HepG2 (cell line): ENCODE measurements at regions of chr18 and their contacts with region 1.

Region 1: DNA sequence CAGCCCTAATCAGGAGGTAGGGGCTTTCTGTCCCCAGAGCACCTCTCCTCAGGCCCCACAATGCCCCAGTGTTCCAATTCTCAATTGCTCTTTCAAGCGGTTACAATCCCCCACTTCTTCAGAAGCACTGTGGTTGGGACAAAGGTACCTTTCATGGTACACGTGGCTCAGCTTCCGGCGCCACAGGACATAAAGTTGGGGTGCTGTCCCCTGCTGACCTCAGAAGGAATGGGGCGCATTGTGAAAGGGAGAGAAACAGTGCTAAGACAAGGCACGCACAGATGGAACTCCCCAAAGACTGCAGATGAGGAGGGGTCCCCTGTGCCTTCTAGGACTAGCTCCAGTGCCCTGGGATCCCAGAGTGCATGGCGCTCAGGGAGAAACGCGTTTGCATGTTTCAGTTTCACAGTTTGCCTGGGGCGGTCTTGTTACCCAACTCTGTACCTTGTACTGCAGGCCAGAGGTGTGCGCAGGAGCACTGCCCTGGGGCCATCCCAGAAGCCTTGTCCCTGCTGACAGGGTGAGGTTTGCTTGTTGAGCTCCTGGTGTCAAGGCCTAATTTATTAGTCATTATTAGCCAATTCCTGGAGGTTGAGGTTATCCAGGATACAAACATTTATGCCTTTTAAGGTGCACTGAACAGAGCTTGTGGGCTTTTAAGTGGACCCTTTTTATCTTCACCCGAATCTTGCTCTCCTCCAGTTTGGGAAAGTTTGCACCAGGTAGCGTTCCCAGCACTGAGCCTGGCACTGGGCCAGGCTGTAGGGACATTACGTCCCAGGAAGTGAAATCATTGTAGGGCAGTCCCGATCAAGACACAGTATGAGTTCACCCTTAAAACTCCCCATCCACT is 7.6 kb downstream of the CNDP1 start:
- DNase-seq: peak; percentile 92
- ATAC-seq: peak; percentile 97
- H3K4me3 ChIP-seq: peak overlapping the region; percentile 5 to 57 (median 12); a peak in 4 of 6 replicates
- H3K27ac ChIP-seq: peak overlapping the region; percentile 96
- H3K4me1 ChIP-seq: peaks cover 53% of the 10 kb centered on the region
- H3K27me3 ChIP-seq: no peaks in the 10 kb centered on the region
- CTCF ChIP-seq: no peak
- EP300 ChIP-seq: peak; percentile 70 to 86; a peak in 2 of 4 replicates
- POLR2A ChIP-seq: peak; percentile 79 to 88
- RAD21 ChIP-seq: peak; percentile 39; the same call in 1 of the 2 replicates

Region 2: DNA sequence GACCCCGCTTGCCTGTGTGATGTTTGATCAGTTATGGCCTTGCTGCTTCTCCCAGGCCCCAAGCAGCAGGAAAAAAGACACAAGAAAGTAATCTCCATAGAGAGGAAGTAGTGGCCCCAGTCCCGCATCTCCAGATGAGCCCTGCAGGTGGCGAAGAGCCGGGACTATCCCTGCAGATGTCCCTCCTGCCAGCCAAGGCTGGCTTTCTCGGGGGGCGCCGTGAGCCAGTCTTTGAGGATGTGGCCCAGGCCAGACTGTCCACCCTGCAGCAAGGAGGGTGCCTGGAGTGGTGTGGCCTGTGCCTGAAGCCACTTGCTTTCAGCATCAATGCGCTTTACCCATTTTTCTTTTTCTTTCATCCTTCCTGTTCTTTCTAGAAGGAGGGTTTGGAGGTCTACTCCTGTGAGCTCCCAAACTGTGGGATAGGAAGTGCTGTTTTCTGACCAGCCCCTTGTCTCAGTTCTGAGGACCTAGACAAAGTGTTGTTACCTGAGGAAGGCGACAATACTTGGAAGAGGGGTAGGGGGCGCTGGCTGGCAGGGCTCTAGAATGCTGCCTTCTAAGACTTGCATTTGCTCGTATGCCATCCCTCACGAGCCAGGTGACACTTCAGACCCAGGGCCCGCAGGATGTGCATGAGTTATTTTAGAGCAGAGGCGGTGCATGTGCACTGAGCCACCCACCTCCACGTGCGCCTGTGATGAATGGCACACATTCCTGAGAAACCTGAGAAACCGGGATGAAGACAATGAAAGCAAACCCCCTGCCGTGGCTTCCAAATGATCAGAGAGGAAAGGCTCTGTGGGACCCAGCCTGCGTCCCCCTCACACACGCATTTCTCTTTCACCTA is 650.1 kb before region 1 on chr18:
- CTCF ChIA-PET with region 1: no interaction called
- POLR2A ChIA-PET with region 1: no interaction called
- in situ Hi-C with region 1: no loop called
- intact Hi-C with region 1: no loop called
- DNase-seq: no peak
- ATAC-seq: peak; percentile 78
- H3K4me3 ChIP-seq: no peak overlapping the region
- H3K27ac ChIP-seq: no peak overlapping the region
- H3K4me1 ChIP-seq: no peaks in the 10 kb centered on the region
- H3K27me3 ChIP-seq: no peaks in the 10 kb centered on the region; a peak in 2 of 5 replicates
- CTCF ChIP-seq: 0 out of 2 replicates have a peak, but pooled peaks have one; percentile 17
- EP300 ChIP-seq: no peak
- POLR2A ChIP-seq: no peak
- RAD21 ChIP-seq: no peak

Region 3: DNA sequence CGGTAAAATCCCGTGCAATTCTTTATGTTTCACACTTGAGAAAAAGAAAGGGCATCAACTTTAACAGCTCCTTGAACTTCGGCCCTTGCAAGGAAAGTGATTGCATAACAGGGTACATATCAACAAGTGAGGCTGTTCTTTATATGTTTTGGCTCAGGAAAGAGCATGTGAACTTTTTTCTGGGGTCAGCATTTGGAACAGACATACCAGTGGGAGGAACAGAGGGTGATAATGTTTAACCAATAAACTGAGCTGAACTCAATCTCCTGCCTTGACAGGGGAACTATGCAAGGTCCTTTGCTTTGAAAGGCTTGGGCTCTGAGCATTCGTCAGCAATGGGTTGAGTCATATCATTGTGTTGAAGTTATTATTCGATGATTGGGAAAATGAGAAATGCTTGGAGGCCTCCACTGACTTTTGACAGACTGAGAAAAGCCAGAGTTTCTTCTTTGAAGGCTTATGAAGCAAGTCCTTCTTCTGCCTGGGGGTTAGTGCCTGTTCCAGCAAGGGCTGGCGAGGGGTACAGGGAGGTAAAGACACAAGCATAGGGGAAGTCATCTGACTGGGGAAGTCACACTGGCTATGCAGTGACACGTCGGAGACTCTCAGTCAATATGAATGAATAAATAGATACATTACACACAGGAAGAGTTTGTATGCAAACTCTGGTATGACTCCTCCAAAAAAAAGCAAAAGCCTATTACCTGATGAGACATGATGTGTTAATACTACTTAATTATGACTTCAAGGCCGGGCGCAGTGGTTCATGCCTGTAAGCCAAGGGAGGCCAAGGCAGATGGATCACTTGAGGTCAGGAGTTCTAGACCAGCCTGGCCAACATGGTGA is 307.4 kb before region 1 on chr18:
- CTCF ChIA-PET with region 1: no interaction called
- POLR2A ChIA-PET with region 1: interaction called, 11 read pairs
- in situ Hi-C with region 1: no loop called
- intact Hi-C with region 1: no loop called
- DNase-seq: peak; percentile 98
- ATAC-seq: peak; percentile 98
- H3K4me3 ChIP-seq: peak overlapping the region in 1 of 3 experiments; percentile 33; a peak in 1 of 6 replicates
- H3K27ac ChIP-seq: peak overlapping the region; percentile 98
- H3K4me1 ChIP-seq: peaks cover 66% of the 10 kb centered on the region
- H3K27me3 ChIP-seq: no peaks in the 10 kb centered on the region
- CTCF ChIP-seq: no peak
- EP300 ChIP-seq: peak; percentile 34 to 96; a peak in 3 of 4 replicates
- POLR2A ChIP-seq: 0 out of 4 replicates have a peak, but pooled peaks have one; percentile 15 to 32
- RAD21 ChIP-seq: no peak

Region 4: GRCh38 chr18:74291771-74292540 is 250.0 kb before region 1 on chr18 and contains the start of gene CYB5A:
- CTCF ChIA-PET with region 1: no interaction called
- POLR2A ChIA-PET with region 1: interaction called, 3 read pairs
- in situ Hi-C with region 1: no loop called
- intact Hi-C with region 1: loop called (anchors 2 kb)
- DNase-seq: peak; percentile 98
- ATAC-seq: peak; percentile 93
- H3K4me3 ChIP-seq: peak within 1 kb of the TSS; percentile 82 to 94 (median 91)
- H3K27ac ChIP-seq: peak within 1 kb of the TSS; percentile 94
- H3K4me1 ChIP-seq: peaks cover 50% of the 10 kb centered on the region
- H3K27me3 ChIP-seq: no peaks in the 10 kb centered on the region; a peak in 1 of 5 replicates
- CTCF ChIP-seq: peak; percentile 13; the same call in 1 of the 2 replicates
- EP300 ChIP-seq: peak; percentile 26 to 74; a peak in 2 of 4 replicates
- POLR2A ChIP-seq: peak; percentile 60 to 72
- RAD21 ChIP-seq: 0 out of 2 replicates have a peak, but pooled peaks have one; percentile 32
- total RNA-seq, gene CYB5A: 356 and 411 TPM in 2 replicates

Region 5: DNA sequence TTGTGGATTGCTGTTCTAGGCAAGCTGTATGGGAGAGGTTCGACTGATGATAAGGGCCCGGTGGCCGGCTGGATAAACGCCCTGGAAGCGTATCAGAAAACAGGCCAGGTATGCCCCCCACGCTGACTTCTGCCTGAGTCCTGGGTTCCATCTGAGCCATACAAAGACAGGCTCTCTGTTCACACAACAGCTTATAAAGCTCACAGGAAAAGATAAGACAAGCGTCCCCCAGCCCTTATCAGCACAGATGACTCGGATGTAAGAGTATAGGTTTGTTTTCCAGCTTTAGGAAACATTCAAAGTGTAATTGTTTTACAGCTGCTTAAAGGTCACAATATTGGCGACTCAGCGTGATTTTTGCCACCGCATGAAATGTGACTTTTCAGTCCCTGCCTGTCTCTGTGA is 33.1 kb before region 1 on chr18:
- CTCF ChIA-PET with region 1: no interaction called
- POLR2A ChIA-PET with region 1: interaction called, 3 read pairs
- in situ Hi-C with region 1: no loop called
- intact Hi-C with region 1: loop called (anchors 1 kb)
- DNase-seq: no peak
- ATAC-seq: no peak; the same call in 1 of the 3 replicates
- H3K4me3 ChIP-seq: no peak overlapping the region
- H3K27ac ChIP-seq: no peak overlapping the region
- H3K4me1 ChIP-seq: peaks cover 10% of the 10 kb centered on the region
- H3K27me3 ChIP-seq: no peaks in the 10 kb centered on the region
- CTCF ChIP-seq: no peak
- EP300 ChIP-seq: peak in 1 of 2 experiments; percentile 15; a peak in 1 of 4 replicates
- POLR2A ChIP-seq: no peak
- RAD21 ChIP-seq: no peak

Region 6: DNA sequence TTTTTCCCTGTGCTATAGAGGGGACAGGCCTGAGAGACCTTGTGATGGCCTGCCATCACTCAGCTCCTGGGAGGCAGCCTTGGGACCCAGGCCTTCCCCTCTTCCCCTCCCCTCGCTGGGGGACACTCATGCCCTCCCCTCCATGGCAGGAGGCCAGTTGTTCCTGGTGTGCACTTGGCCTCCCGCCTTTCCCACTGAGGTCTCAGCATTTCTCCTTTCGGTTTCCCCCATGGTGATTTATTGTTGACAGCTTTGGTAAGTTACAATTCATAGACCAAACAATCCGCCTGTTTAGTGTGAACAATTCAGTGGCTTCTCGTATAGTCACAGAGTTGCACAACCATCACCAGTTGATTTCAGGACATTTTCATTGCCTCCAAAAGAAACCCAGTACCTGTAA is 17.8 kb before region 1 on chr18:
- CTCF ChIA-PET with region 1: no interaction called
- POLR2A ChIA-PET with region 1: interaction called, 13 read pairs
- in situ Hi-C with region 1: no loop called
- intact Hi-C with region 1: no loop called
- DNase-seq: no peak
- ATAC-seq: no peak
- H3K4me3 ChIP-seq: no peak overlapping the region
- H3K27ac ChIP-seq: no peak overlapping the region
- H3K4me1 ChIP-seq: peaks cover 7% of the 10 kb centered on the region; the same call in 1 of the 2 replicates
- H3K27me3 ChIP-seq: no peaks in the 10 kb centered on the region
- CTCF ChIP-seq: no peak
- EP300 ChIP-seq: no peak
- POLR2A ChIP-seq: no peak
- RAD21 ChIP-seq: no peak

Region 7: DNA sequence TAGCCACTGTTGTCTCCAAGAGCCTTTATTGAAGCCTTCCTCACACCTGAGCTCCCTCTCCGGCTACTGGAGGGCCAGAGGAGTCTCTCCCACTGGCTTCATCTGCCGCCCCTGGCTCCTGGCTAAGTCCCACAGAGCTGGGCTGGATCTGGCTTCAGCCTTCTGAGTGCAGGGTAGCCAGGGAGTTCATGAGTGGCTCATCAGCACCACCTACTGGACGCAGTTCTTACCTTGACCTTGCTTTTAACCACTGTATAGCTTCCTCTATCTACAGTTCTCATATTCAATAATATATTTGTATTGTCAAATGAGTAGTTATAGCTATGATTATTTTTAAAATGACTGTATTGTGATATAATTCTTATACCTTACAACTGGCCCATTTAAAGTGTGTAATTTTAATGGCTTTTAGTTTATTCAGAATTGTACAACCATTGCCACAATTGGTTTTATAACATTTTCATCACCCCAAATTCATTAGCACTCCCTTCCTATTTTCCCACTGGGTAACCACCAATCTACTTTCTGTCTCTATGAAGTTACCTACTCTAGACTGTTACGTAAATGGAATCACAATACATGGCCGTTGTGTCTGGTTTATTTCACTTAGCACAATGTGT is 10.1 kb after region 1 on chr18:
- CTCF ChIA-PET with region 1: no interaction called
- POLR2A ChIA-PET with region 1: interaction called, 25 read pairs
- in situ Hi-C with region 1: no loop called
- intact Hi-C with region 1: no loop called
- DNase-seq: peak; percentile 74
- ATAC-seq: peak; percentile 99
- H3K4me3 ChIP-seq: no peak overlapping the region
- H3K27ac ChIP-seq: no peak overlapping the region
- H3K4me1 ChIP-seq: peaks cover 16% of the 10 kb centered on the region
- H3K27me3 ChIP-seq: peaks cover 0 to 11% of the 10 kb centered on the region in 2 experiments; a peak in 3 of 5 replicates
- CTCF ChIP-seq: peak; percentile 91
- EP300 ChIP-seq: no peak
- POLR2A ChIP-seq: no peak
- RAD21 ChIP-seq: peak; percentile 68

Region 8: GRCh38 chr18:74597662-74598349 is 55.9 kb after region 1 on chr18 and contains the start of gene ZNF407:
- CTCF ChIA-PET with region 1: no interaction called
- POLR2A ChIA-PET with region 1: interaction called, 10 read pairs
- in situ Hi-C with region 1: no loop called
- intact Hi-C with region 1: no loop called
- DNase-seq: peak; percentile 90
- ATAC-seq: peak; percentile 88
- H3K4me3 ChIP-seq: peak within 1 kb of the TSS; percentile 81 to 91 (median 90)
- H3K27ac ChIP-seq: peak within 1 kb of the TSS; percentile 85
- H3K4me1 ChIP-seq: peaks cover 26% of the 10 kb centered on the region
- H3K27me3 ChIP-seq: no peaks in the 10 kb centered on the region; a peak in 1 of 5 replicates
- CTCF ChIP-seq: no peak
- EP300 ChIP-seq: no peak
- POLR2A ChIP-seq: peak; percentile 48 to 74; a peak in 3 of 4 replicates
- RAD21 ChIP-seq: 0 out of 2 replicates have a peak, but pooled peaks have one; percentile 2
- total RNA-seq, gene ZNF407: 8.3 and 8.7 TPM in 2 replicates